RWPE1 (cell line): ENCODE measurements at regions of chr13 and their contacts with region 1.

Region 1: DNA sequence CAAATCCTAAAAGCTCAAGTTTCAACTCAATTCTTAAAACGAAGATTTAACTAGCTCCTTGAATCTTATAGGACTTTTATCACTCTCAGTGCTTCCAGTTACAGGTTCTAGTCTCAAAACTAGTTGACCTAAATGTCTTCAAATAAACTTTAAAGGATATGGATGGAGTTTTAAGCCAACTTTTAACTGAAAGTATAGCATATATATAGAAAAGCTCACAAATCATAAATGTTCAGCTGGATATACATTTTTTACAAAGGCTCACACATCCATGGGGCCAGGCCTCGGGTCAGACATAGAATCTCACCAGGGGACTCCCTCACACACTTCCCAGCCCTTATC is 47.1 kb upstream of the ARHGEF7 start:
- DNase-seq: no peak
- H3K27ac ChIP-seq: no peak overlapping the region
- CTCF ChIP-seq: peak; percentile 68

Region 2: GRCh38 chr13:110978390-110978789 is 89.6 kb before region 1 on chr13:
- CTCF ChIA-PET with region 1: no interaction called
- POLR2A ChIA-PET with region 1: no interaction called
- DNase-seq: no peak
- H3K27ac ChIP-seq: no peak overlapping the region
- CTCF ChIP-seq: no peak

Region 3: GRCh38 chr13:111216166-111216960 is 148.4 kb after region 1 on chr13:
- CTCF ChIA-PET with region 1: interaction called, 11 read pairs
- POLR2A ChIA-PET with region 1: no interaction called
- DNase-seq: peak; percentile 34
- H3K27ac ChIP-seq: no peak overlapping the region
- CTCF ChIP-seq: peak; percentile 31